Tibial artery (tissue), 4 donors: ENCODE measurements at regions of chr7 and their contacts with region 1.

Region 1: DNA sequence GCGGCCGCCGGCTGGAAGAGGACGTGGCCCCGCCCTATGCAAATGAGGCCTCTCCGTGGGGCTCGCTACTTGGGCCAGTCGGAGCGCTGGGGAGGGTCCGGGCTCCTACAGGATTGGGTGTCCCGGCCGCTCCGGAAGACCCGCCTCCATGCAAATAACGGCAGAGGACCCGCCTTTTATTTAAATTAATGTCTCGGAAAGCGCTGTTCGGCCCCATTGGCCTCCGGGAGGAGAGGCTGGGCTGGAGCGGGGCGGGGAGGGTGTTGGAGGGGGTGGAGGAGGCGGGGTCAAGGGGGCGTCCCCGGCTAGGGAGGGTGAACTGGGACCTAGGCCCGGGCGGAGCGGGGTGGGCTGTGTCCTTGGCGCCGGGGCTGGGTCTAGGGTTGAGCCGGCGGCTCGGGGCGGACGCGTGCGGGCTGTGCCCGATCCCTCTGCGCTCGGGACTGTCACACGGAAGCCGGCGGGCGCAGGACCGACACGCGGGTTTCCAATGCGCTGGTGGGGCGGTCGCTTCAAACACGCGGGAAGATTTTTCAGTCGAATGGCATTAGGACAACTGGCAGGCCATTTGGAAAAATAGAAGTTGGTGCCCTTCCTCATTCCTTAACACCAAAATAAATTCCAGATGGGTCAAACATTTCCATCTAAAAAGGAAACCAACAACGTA is 344 bp upstream of the POLM start:
- DNase-seq: peak; percentile 100
- H3K4me3 ChIP-seq: peak overlapping the region; percentile 91 to 95
- H3K27ac ChIP-seq: peak overlapping the region; percentile 93 to 98
- H3K4me1 ChIP-seq: peaks cover 0 to 74% (median 66%) of the 10 kb centered on the region in 4 donors
- H3K27me3 ChIP-seq: no peaks in the 10 kb centered on the region
- CTCF ChIP-seq: no peak

Region 2: GRCh38 chr7:44103923-44104859 is 21.5 kb after region 1 on chr7 and contains the start of gene AEBP1:
- intact Hi-C with region 1: loop called (anchors 2 kb)
- DNase-seq: peak in 1 of 2 donors; percentile 77
- H3K4me3 ChIP-seq: peak within 1 kb of the TSS; percentile 52 to 58
- H3K27ac ChIP-seq: peak within 1 kb of the TSS; percentile 98 to 100
- H3K4me1 ChIP-seq: peaks cover 12 to 99% (median 82%) of the 10 kb centered on the region in 4 donors
- H3K27me3 ChIP-seq: no peaks in the 10 kb centered on the region
- CTCF ChIP-seq: no peak

Region 3: DNA sequence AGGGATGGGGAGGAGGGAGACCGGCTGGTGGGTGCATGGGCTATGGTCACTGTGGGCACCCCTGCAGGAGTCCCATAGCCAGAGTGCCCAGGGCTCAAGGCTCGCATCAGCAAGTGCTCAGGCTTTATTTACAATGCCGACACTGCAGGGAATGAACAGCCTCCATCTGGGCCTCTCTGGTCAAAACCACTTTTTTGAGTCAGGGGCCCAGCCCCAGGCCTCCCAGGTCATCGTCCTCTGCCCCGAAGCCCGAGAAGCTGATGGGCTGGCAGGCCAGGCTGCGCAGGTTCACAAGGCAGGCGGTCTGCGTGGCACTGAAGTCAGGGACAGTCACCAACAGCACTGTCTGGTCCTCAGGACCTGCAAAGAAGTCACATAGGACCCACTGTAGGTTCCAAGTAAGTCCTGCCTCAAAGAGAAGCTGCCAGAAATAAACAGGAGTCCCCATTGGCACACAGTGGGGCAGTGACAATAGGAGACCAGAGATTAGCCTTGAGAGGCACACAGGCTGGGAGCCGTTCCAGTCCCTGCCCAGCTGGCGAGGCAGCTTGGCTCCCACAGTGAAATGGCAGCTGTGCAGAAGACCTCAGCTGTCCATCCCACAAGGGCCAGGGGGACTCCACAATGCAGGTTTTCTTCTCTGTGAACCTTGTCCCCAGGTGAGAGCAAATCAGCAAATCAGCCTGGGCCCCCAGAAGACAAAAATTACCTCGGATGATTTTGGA is 32.1 kb after region 1 on chr7:
- intact Hi-C with region 1: loop called (anchors 5 kb)
- DNase-seq: peak in 1 of 2 donors; percentile 77
- H3K4me3 ChIP-seq: no peak overlapping the region
- H3K27ac ChIP-seq: peak overlapping the region; percentile 98 to 100
- H3K4me1 ChIP-seq: peaks cover 0 to 48% (median 45%) of the 10 kb centered on the region in 4 donors
- H3K27me3 ChIP-seq: no peaks in the 10 kb centered on the region
- CTCF ChIP-seq: no peak